ENCODE measurements at regions of chr19 and their contacts with region 1.

Region 1: GRCh38 chr19:17496337-17496997 is 15.0 kb upstream of the PGLS start:
- DNase-seq: peak; percentile 90
- ATAC-seq: peak; percentile 98
- H3K4me3 Mint-ChIP-seq: peak overlapping the region; percentile 13
- H3K27ac Mint-ChIP-seq: peak overlapping the region; percentile 72
- H3K4me1 Mint-ChIP-seq: peaks cover 42% of the 10 kb centered on the region
- H3K27me3 Mint-ChIP-seq: no peaks in the 10 kb centered on the region

Region 2: DNA sequence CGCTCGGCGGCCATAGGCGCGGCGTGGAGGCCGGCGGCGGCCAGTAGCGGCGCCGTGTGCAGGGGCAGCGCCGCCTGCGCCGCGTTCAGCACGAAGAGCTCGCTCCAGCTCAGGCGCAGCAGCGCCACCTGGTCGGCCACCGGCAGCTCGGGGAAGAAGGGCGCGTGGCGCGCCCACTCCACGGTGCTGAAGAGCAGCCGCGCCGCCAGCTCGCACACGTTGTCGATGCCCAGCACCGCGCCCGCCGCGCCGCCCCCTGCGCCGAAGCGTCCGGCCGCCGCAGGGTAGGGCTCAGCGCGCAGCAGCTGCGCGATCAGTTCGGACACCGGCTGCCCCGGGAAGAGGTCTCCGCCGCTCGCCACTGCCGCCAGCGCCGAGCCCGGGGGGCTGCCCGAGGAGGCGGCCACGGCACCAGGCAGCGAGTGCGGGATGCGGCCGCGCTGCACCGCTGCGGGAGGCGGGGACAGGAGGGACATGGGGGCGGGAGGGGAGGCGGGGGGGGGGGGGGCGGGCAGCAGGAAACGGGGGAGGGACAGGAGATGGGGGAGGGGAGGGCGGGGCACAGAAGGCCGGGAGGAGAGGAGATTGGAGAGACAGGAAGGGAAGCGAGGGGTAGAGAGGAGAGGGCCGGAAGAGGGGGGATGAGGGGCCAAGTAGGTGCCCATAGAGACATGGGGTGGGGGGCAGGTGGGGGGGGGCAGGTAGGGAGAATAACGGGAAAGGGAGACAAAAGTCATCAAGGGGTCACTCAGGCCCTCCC is 260.7 kb before region 1 on chr19:
- CTCF ChIA-PET with region 1: no interaction called
- POLR2A ChIA-PET with region 1: no interaction called
- DNase-seq: peak; percentile 82
- ATAC-seq: peak; percentile 96
- H3K4me3 Mint-ChIP-seq: peak overlapping the region; percentile 81
- H3K27ac Mint-ChIP-seq: no peak overlapping the region
- H3K4me1 Mint-ChIP-seq: peaks cover 12% of the 10 kb centered on the region
- H3K27me3 Mint-ChIP-seq: no peaks in the 10 kb centered on the region

Region 3: GRCh38 chr19:17479325-17479791 is 17.1 kb before region 1 on chr19:
- CTCF ChIA-PET with region 1: interaction called, 49 read pairs
- POLR2A ChIA-PET with region 1: no interaction called
- DNase-seq: no peak
- ATAC-seq: no peak
- H3K4me3 Mint-ChIP-seq: no peak overlapping the region
- H3K27ac Mint-ChIP-seq: no peak overlapping the region
- H3K4me1 Mint-ChIP-seq: no peaks in the 10 kb centered on the region
- H3K27me3 Mint-ChIP-seq: no peaks in the 10 kb centered on the region

Region 4: GRCh38 chr19:17511724-17512573 is 15.5 kb after region 1 on chr19:
- CTCF ChIA-PET with region 1: interaction called, 50 read pairs
- POLR2A ChIA-PET with region 1: interaction called, 11 read pairs
- DNase-seq: peak; percentile 94
- ATAC-seq: peak; percentile 74
- H3K4me3 Mint-ChIP-seq: peak overlapping the region; percentile 94
- H3K27ac Mint-ChIP-seq: peak overlapping the region; percentile 97
- H3K4me1 Mint-ChIP-seq: peaks cover 44% of the 10 kb centered on the region
- H3K27me3 Mint-ChIP-seq: no peaks in the 10 kb centered on the region

Region 5: GRCh38 chr19:17549085-17549740 is 52.7 kb after region 1 on chr19:
- CTCF ChIA-PET with region 1: interaction called, 11 read pairs
- POLR2A ChIA-PET with region 1: interaction called, 3 read pairs
- DNase-seq: no peak
- ATAC-seq: no peak
- H3K4me3 Mint-ChIP-seq: no peak overlapping the region
- H3K27ac Mint-ChIP-seq: no peak overlapping the region
- H3K4me1 Mint-ChIP-seq: no peaks in the 10 kb centered on the region
- H3K27me3 Mint-ChIP-seq: no peaks in the 10 kb centered on the region

Region 6: DNA sequence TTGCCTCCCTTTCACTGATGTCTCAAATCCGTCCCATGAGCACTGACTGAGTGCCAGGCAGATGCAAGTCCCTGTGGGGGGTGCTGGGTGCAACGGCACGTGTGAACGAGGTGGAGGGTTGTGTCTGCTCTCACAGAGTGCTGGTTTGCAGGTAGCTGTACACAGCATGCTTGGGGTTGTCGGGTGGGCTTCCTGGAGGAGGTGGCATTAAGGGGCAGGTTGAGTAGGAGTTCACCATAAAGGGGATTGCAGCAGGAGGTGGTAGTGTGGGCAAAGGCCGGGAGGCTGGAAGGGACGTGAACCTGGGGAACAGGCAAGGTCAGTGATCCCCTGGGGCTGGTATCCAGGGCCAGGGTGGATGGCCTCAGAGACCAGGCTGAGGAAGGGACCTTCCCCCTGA is 76.2 kb after region 1 on chr19:
- CTCF ChIA-PET with region 1: interaction called, 37 read pairs
- POLR2A ChIA-PET with region 1: no interaction called
- DNase-seq: no peak
- ATAC-seq: no peak
- H3K4me3 Mint-ChIP-seq: no peak overlapping the region
- H3K27ac Mint-ChIP-seq: peak overlapping the region; percentile 41
- H3K4me1 Mint-ChIP-seq: peaks cover 6% of the 10 kb centered on the region
- H3K27me3 Mint-ChIP-seq: no peaks in the 10 kb centered on the region